ENCODE measurements at regions of chr6 and their contacts with region 1.

Region 1: DNA sequence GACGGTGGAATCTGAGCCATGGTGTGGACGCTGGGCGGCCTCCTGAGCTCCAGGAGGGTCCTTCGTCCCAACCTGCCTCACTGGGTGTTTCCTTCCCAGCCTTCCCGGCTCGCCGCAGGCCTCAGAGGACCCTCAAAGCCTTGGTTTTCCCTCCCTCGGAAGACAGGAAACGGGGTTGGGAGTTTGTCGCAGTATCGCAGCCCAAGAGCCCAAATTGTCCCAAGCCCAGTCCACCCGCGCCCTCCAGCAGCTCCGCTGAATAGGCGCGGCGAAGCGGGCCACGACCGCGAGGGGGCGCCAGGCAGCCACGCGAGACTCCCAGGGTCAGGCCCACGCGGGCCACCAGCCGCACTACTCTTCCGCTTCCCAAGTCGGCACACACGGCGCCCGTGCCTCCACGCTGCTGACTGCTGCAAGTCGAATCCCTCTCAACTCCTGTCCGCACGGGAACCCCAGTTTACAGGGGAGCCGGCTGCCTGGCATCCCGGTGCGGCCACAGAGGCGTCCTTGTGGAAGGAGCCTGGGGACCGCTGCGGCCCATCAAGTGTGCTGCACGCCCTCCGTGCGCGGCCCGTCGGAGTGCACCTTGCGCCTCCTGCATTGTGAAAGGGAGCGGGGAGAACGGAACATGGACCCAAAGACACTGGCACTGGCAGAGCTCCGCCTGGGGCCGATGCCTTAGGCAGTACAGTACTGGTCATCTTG is 40.4 kb upstream of the HMGA1 start:
- DNase-seq: peak; percentile 79 to 95 (median 88)
- ATAC-seq: peak; percentile 99
- H3K4me3 ChIP-seq: peak overlapping the region; percentile 90
- H3K4me3 Mint-ChIP-seq: peak overlapping the region; percentile 79 to 91 (median 87)
- H3K27ac ChIP-seq: peak overlapping the region; percentile 72
- H3K27ac Mint-ChIP-seq: peak overlapping the region in 5 of 9 donors; percentile 9 to 69 (median 61)
- H3K4me1 ChIP-seq: peaks cover 4 to 6% of the 10 kb centered on the region in 2 donors
- H3K4me1 Mint-ChIP-seq: peaks cover 0 to 11% (median 8%) of the 10 kb centered on the region in 7 donors
- H3K27me3 ChIP-seq: no peaks in the 10 kb centered on the region
- H3K27me3 Mint-ChIP-seq: peaks cover 0 to 13% (median 0%) of the 10 kb centered on the region in 5 donors

Region 2: GRCh38 chr6:33994472-33995308 is 201.6 kb before region 1 on chr6:
- CTCF ChIA-PET with region 1: no interaction called
- POLR2A ChIA-PET with region 1: no interaction called
- intact Hi-C with region 1: no loop called
- DNase-seq: no peak
- ATAC-seq: no peak
- H3K4me3 ChIP-seq: no peak overlapping the region
- H3K4me3 Mint-ChIP-seq: no peak overlapping the region
- H3K27ac ChIP-seq: no peak overlapping the region
- H3K27ac Mint-ChIP-seq: no peak overlapping the region
- H3K4me1 ChIP-seq: no peaks in the 10 kb centered on the region
- H3K4me1 Mint-ChIP-seq: peaks cover 0 to 5% (median 0%) of the 10 kb centered on the region in 7 donors
- H3K27me3 ChIP-seq: no peaks in the 10 kb centered on the region
- H3K27me3 Mint-ChIP-seq: peaks cover 0 to 28% (median 4%) of the 10 kb centered on the region in 5 donors

Region 3: GRCh38 chr6:34161857-34162515 is 34.3 kb before region 1 on chr6:
- CTCF ChIA-PET with region 1: interaction called, 22 read pairs
- POLR2A ChIA-PET with region 1: interaction called, 3 read pairs
- intact Hi-C with region 1: loop called (anchors 1 to 5 kb)
- DNase-seq: no peak
- ATAC-seq: no peak
- H3K4me3 ChIP-seq: no peak overlapping the region
- H3K4me3 Mint-ChIP-seq: no peak overlapping the region
- H3K27ac ChIP-seq: no peak overlapping the region
- H3K27ac Mint-ChIP-seq: peak overlapping the region in 1 of 9 donors; percentile 44
- H3K4me1 ChIP-seq: no peaks in the 10 kb centered on the region
- H3K4me1 Mint-ChIP-seq: peaks cover 0 to 8% (median 0%) of the 10 kb centered on the region in 7 donors
- H3K27me3 ChIP-seq: no peaks in the 10 kb centered on the region
- H3K27me3 Mint-ChIP-seq: peaks cover 0 to 32% (median 0%) of the 10 kb centered on the region in 5 donors

Region 4: GRCh38 chr6:34392497-34393190 is 196.4 kb after region 1 on chr6 and contains the start of gene NUDT3:
- CTCF ChIA-PET with region 1: no interaction called
- POLR2A ChIA-PET with region 1: interaction called, 4 read pairs
- intact Hi-C with region 1: loop called (anchors 1 to 2 kb)
- DNase-seq: peak; percentile 88 to 98 (median 93)
- ATAC-seq: peak; percentile 93
- H3K4me3 ChIP-seq: peak within 1 kb of the TSS; percentile 92
- H3K4me3 Mint-ChIP-seq: peak within 1 kb of the TSS in 4 of 10 donors; percentile 79 to 99 (median 98)
- H3K27ac ChIP-seq: peak within 1 kb of the TSS; percentile 85
- H3K27ac Mint-ChIP-seq: peak within 1 kb of the TSS in 8 of 9 donors; percentile 89 to 95 (median 92)
- H3K4me1 ChIP-seq: peaks cover 11 to 16% of the 10 kb centered on the region in 2 donors
- H3K4me1 Mint-ChIP-seq: peaks cover 0 to 28% (median 23%) of the 10 kb centered on the region in 7 donors
- H3K27me3 ChIP-seq: no peaks in the 10 kb centered on the region
- H3K27me3 Mint-ChIP-seq: peaks cover 0 to 2% (median 0%) of the 10 kb centered on the region in 5 donors
- total RNA-seq, gene NUDT3: 16.2 to 29.7 (median 25.4) TPM

Region 5: DNA sequence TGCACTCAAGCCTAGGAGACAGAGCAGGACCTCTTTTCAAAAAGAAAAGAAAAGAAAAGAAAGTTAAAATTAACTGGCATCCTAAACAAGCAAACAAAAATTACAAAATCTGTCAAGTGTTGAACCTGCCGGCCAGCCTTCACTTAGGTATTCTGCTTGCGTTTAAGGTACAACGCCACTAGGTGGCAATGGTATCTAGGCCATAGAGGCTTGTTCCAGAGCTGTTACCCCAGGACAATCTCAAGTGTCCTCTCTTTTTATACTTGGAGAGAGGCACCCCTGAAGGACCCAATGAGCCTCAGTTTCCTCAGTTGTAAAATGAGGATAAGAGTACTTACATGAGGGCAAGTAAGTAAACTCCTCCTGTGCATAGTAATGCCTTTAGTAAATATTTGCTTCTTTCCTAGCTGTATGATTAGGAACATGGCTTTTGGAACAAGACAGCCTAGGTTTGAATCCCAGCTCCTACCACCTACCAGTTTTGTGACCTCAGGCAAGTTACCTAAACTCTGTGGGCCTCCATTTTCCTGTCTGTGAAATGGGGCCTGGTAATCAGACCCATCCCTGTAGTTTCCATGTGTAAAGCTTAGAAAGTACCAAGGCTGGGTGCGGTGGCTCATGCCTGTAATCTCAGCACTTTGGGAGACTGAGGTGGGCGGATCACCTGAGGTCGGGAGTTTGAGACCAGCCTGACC is 263.8 kb after region 1 on chr6:
- CTCF ChIA-PET with region 1: interaction called, 4 read pairs
- POLR2A ChIA-PET with region 1: no interaction called
- intact Hi-C with region 1: loop called in 1 of 2 experiments (anchors 1 kb)
- DNase-seq: peak in 8 of 9 donors; percentile 23 to 55 (median 50)
- ATAC-seq: peak; percentile 82
- H3K4me3 ChIP-seq: no peak overlapping the region
- H3K4me3 Mint-ChIP-seq: no peak overlapping the region
- H3K27ac ChIP-seq: no peak overlapping the region
- H3K27ac Mint-ChIP-seq: no peak overlapping the region
- H3K4me1 ChIP-seq: no peaks in the 10 kb centered on the region
- H3K4me1 Mint-ChIP-seq: peaks cover 0 to 2% (median under 1%) of the 10 kb centered on the region in 7 donors
- H3K27me3 ChIP-seq: no peaks in the 10 kb centered on the region
- H3K27me3 Mint-ChIP-seq: peaks cover 4 to 24% (median 17%) of the 10 kb centered on the region in 5 donors

Region 6: DNA sequence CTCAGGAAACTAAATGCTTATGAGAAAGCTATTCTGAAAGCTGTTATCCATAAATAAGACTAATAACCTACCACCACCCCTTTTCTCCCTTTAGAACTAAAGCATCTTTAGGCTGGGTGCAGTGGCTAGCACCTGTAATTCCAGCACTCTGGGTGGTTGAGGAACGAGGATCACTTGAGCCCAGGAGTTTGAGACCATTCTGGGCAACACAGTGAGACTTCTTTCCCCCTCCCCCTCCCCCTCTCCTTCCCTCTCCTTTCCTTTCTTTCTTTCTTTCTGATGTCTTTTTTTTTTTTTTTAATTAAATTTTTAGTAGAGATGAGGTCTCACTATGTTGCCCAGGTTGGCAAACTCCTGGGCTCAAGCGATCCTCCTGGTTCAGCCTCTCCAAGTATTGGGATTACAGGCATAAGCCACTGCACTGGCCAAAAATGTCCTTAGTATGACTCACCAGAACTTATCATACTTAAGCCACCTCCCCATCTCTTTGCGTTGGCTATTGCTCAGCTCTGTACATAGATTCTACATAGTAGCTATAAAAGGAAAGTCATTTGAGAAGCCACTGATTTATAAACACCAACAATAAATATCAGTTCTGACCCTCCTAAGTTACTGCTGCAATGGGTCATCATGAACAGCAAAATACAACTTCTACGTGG is 414.7 kb after region 1 on chr6:
- CTCF ChIA-PET with region 1: interaction called, 23 read pairs
- POLR2A ChIA-PET with region 1: no interaction called
- intact Hi-C with region 1: loop called (anchors 1 kb)
- DNase-seq: no peak
- ATAC-seq: no peak
- H3K4me3 ChIP-seq: no peak overlapping the region
- H3K4me3 Mint-ChIP-seq: no peak overlapping the region
- H3K27ac ChIP-seq: no peak overlapping the region
- H3K27ac Mint-ChIP-seq: peak overlapping the region in 1 of 9 donors; percentile 63
- H3K4me1 ChIP-seq: no peaks in the 10 kb centered on the region
- H3K4me1 Mint-ChIP-seq: peaks cover 2 to 17% (median 13%) of the 10 kb centered on the region in 7 donors
- H3K27me3 ChIP-seq: no peaks in the 10 kb centered on the region
- H3K27me3 Mint-ChIP-seq: no peaks in the 10 kb centered on the region